ENCODE measurements at regions of chr6 and their contacts with region 1.

Region 1: DNA sequence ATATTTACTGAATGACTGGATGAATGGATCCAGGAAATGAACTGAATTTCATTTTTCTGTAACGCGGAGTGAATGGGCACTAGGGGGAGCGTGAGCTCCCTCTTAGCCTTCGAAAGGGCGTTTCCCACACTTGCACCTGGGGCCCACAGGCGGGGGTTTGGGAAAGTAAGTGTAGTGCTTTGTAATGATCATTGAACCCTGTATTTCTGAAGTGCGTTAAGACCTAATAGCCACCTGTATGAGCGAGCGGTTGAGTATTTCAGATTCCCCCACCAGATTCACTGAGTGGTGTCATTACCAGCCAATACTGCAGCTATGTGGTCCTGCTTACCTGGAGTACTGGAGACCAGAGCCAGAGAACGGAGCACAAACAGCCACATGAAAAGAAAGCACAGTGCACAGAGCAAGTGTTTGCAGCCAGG is 10.5 kb downstream of the SYTL3 start:
- DNase-seq: no peak
- ATAC-seq: no peak
- H3K4me3 ChIP-seq: no peak overlapping the region
- H3K27ac ChIP-seq: no peak overlapping the region
- H3K4me1 ChIP-seq: peaks cover 14 to 30% of the 10 kb centered on the region in 2 donors
- H3K27me3 ChIP-seq: no peaks in the 10 kb centered on the region
- CTCF ChIP-seq: peak in 3 of 5 experiments; percentile 18 to 41 (median 19)
- POLR2A ChIP-seq: no peak

Region 2: DNA sequence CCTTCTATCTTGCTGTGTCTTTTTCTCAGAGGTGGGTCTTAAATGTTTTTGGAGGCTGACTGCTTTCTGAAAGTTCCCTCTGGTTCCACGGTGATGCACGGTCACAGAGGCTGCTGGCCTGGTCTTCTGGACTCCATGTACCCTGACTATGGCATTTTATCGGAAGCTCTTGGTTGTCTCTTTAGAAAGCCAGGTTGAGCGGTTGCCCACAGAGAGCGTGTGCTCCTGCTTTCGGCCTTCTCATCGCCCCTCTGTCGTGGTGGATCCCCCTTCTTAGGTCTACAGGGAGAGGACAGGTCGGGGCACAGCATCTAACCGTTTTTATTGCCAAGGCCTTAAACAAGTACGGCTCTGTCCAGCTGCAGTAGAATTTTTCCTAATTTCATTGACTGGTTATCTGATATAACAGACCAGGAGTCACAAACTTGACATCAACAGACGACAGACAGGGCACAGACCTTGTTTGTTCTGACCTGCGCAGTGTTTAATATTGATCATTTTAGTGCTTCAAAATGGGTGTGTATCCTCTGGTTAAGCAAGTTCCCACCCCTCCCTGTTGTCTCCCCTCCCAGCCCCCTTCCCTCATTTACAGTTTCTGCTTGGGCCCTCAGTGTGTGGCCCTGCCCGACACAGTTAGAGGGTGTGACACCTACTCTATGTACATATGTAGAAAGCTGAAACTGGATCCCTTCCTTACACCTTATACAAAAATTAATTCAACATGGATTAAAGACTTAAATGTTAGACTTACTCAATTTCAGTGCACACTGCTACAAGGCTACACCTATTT is 14.2 kb after region 1 on chr6:
- in situ Hi-C with region 1: no loop called
- intact Hi-C with region 1: loop called (anchors 1 kb)
- DNase-seq: no peak
- ATAC-seq: no peak
- H3K4me3 ChIP-seq: no peak overlapping the region
- H3K27ac ChIP-seq: no peak overlapping the region
- H3K4me1 ChIP-seq: peaks cover 0 to 10% of the 10 kb centered on the region in 2 donors
- H3K27me3 ChIP-seq: no peaks in the 10 kb centered on the region
- CTCF ChIP-seq: no peak
- POLR2A ChIP-seq: no peak

Region 3: GRCh38 chr6:160069050-160069454 is 1408.7 kb after region 1 on chr6:
- in situ Hi-C with region 1: no loop called
- intact Hi-C with region 1: loop called (anchors 10 kb)
- DNase-seq: no peak
- ATAC-seq: no peak
- H3K4me3 ChIP-seq: no peak overlapping the region
- H3K27ac ChIP-seq: no peak overlapping the region
- H3K4me1 ChIP-seq: peaks cover 10 to 28% of the 10 kb centered on the region in 2 donors
- H3K27me3 ChIP-seq: no peaks in the 10 kb centered on the region
- CTCF ChIP-seq: no peak
- POLR2A ChIP-seq: no peak